ENCODE measurements at regions of chr3 and their contacts with region 1.

Region 1: GRCh38 chr3:112013058-112013783 is 14.5 kb downstream of the TAGLN3 start:
- DNase-seq: peak; percentile 81
- H3K4me3 Mint-ChIP-seq: no peak overlapping the region
- H3K27ac Mint-ChIP-seq: no peak overlapping the region
- H3K4me1 Mint-ChIP-seq: peaks cover 17% of the 10 kb centered on the region
- H3K27me3 Mint-ChIP-seq: no peaks in the 10 kb centered on the region

Region 2: GRCh38 chr3:111071257-111072015 is 941.8 kb before region 1 on chr3 and contains the start of gene NECTIN3:
- CTCF ChIA-PET with region 1: no interaction called
- intact Hi-C with region 1: no loop called
- DNase-seq: peak; percentile 91
- H3K4me3 Mint-ChIP-seq: peak within 1 kb of the TSS; percentile 85
- H3K27ac Mint-ChIP-seq: peak within 1 kb of the TSS; percentile 27
- H3K4me1 Mint-ChIP-seq: peaks cover 24% of the 10 kb centered on the region
- H3K27me3 Mint-ChIP-seq: peaks cover 40% of the 10 kb centered on the region
- total RNA-seq, gene NECTIN3: 3.0 to 3.5 TPM

Region 3: GRCh38 chr3:111717601-111718000 is 295.6 kb before region 1 on chr3:
- CTCF ChIA-PET with region 1: interaction called, 54 read pairs
- intact Hi-C with region 1: loop called (anchors 1 kb)
- DNase-seq: peak; percentile 83
- H3K4me3 Mint-ChIP-seq: no peak overlapping the region
- H3K27ac Mint-ChIP-seq: no peak overlapping the region
- H3K4me1 Mint-ChIP-seq: no peaks in the 10 kb centered on the region
- H3K27me3 Mint-ChIP-seq: no peaks in the 10 kb centered on the region

Region 4: GRCh38 chr3:111895079-111895478 is 118.1 kb before region 1 on chr3:
- CTCF ChIA-PET with region 1: interaction called, 10 read pairs
- intact Hi-C with region 1: loop called (anchors 1 kb)
- DNase-seq: no peak
- H3K4me3 Mint-ChIP-seq: no peak overlapping the region
- H3K27ac Mint-ChIP-seq: no peak overlapping the region
- H3K4me1 Mint-ChIP-seq: no peaks in the 10 kb centered on the region
- H3K27me3 Mint-ChIP-seq: peaks cover 2% of the 10 kb centered on the region

Region 5: DNA sequence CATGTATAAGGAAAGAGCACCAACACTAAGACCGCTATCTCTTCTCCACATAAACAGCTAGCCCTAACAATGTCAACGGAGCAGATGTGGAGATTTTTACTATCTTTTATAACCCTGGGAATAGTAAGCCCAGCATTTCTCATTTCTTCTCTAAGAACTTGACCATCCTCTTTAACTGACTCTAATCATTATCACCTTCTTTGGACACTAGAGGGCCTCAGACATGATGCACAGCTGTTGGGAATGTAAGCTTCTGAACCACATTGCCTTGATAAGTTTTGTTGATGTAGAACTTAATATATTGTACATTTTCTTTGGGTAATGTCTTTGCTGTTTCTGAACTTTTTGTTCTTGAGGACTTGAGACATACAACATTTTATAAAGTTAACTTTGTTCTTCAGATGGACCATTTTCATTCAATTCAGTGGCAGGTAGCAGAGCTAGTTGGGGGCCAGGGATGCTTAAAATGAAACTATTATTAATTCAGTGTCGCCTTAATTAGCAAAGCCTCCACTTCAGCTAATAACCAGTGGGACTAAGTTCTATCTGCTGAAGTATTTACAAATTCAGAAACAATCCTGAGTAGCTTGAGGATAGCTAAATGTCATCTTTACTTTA is 24.1 kb before region 1 on chr3:
- CTCF ChIA-PET with region 1: interaction called, 454 read pairs
- intact Hi-C with region 1: loop called (anchors 1 kb)
- DNase-seq: no peak
- H3K4me3 Mint-ChIP-seq: no peak overlapping the region
- H3K27ac Mint-ChIP-seq: no peak overlapping the region
- H3K4me1 Mint-ChIP-seq: peaks cover 27% of the 10 kb centered on the region
- H3K27me3 Mint-ChIP-seq: no peaks in the 10 kb centered on the region

Region 6: DNA sequence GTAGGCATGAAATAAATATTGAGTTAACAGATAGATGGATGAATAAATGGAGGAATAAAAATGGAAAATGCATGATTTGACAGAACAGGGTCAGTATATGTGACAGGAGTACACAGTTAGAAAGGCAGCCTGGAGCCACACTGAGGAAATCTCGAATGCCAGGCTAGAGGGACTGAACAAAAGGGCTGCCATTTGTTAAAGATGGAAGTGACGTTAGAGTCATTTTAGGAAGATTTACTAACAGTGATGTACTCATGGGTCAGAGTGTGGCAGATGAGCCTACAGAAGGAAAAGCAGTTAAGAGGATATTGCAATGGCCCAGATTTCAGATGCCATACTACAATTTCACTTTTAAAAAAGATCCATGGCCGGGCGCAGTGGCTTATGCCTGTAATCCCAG is 13.9 kb after region 1 on chr3:
- CTCF ChIA-PET with region 1: interaction called, 12 read pairs
- intact Hi-C with region 1: no loop called
- DNase-seq: no peak
- H3K4me3 Mint-ChIP-seq: no peak overlapping the region
- H3K27ac Mint-ChIP-seq: no peak overlapping the region
- H3K4me1 Mint-ChIP-seq: no peaks in the 10 kb centered on the region
- H3K27me3 Mint-ChIP-seq: no peaks in the 10 kb centered on the region

Region 7: DNA sequence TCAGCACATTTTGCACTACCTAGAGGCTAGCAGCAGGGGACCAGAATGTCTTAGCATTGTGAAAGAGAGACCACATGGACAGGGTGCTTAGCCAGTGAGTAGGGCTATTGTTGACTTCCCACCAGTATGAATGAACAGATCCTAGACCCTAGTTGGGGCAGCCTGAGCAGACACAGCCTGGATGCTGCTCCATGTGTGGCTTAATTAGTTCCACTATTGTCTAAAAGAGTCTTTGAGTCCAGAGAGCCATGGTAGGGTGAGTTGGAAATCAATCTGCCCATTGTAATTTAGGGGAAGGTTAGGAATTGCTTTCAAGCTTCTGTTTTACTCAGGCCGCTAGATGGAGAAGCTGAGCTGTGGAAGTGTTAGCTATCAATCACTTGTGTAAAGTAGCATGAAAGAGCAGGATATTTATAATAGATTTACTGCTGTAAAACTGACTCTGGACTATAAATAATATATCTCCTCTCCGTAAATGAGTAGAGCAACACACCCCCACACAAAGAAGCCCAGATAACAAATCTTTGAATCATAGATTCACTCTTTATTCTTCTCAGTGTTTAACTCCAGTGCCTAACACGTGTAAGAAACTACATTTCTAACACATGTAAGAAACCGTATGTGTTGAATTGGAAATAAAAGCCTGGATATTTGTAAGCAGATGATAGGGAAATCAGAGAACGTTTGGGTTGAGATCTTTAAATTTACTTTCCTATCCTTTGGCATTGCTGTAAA is 123.9 kb after region 1 on chr3:
- CTCF ChIA-PET with region 1: no interaction called
- intact Hi-C with region 1: no loop called
- DNase-seq: peak; percentile 81
- H3K4me3 Mint-ChIP-seq: no peak overlapping the region
- H3K27ac Mint-ChIP-seq: no peak overlapping the region
- H3K4me1 Mint-ChIP-seq: peaks cover 64% of the 10 kb centered on the region
- H3K27me3 Mint-ChIP-seq: no peaks in the 10 kb centered on the region